Left lung (tissue), 14 donors: ENCODE measurements at regions of chr15 and their contacts with region 1.

Region 1: GRCh38 chr15:68154923-68155559 is 50.1 kb downstream of the CALML4 start:
- DNase-seq: peak in 2 of 4 donors; percentile 56 to 78
- ATAC-seq: peak; percentile 81
- H3K4me3 ChIP-seq: no peak overlapping the region
- H3K27ac ChIP-seq: no peak overlapping the region
- H3K4me1 ChIP-seq: peaks cover 0 to 8% of the 10 kb centered on the region in 2 donors
- H3K27me3 ChIP-seq: no peaks in the 10 kb centered on the region
- CTCF ChIP-seq: peak; percentile 28 to 68

Region 2: DNA sequence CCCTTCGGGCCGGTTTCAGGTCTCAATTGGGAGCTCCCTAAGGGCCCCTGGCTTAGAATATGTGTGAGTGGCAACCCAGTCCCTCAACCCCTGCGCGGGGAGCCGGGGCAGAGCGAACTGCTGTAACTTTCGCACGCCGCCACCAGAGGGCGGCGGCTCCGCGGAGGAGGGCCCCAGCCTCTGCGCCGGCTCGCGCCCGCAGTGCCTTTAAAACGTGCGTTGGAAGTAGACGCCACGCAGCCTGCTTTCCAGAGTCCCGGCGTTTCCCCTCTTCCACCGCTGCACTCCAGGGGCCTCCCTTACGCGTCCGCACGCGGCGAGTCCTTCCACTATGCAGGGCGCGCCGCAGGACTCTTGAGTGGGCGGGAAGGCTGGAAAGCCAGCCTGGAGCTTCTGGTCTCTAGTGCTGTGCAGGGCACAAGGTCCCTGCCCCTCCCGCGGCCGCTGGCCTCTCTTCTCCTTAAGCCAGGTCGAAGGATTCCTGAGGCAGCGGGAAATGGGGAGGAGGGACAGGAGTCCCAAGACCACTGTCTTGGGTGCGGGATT is 291.5 kb before region 1 on chr15:
- intact Hi-C with region 1: loop called in 1 of 2 experiments (anchors 10 kb)
- DNase-seq: peak; percentile 79 to 97 (median 81)
- ATAC-seq: peak; percentile 99
- H3K4me3 ChIP-seq: peak overlapping the region; percentile 29 to 31
- H3K27ac ChIP-seq: no peak overlapping the region
- H3K4me1 ChIP-seq: peaks cover 5 to 9% of the 10 kb centered on the region in 2 donors
- H3K27me3 ChIP-seq: no peaks in the 10 kb centered on the region
- CTCF ChIP-seq: peak; percentile 95 to 97